HepG2 (cell line): ENCODE measurements at regions of chr7 and their contacts with region 1.

Region 1: GRCh38 chr7:50696810-50697582 is 85.7 kb downstream of the GRB10 start:
- DNase-seq: peak; percentile 32
- ATAC-seq: peak; percentile 77
- H3K4me3 ChIP-seq: no peak overlapping the region
- H3K27ac ChIP-seq: no peak overlapping the region
- H3K4me1 ChIP-seq: 0 out of 2 replicates have a peak, but pooled peaks cover 11% of the 10 kb centered on the region
- H3K27me3 ChIP-seq: no peaks in the 10 kb centered on the region
- CTCF ChIP-seq: peak; percentile 55
- EP300 ChIP-seq: no peak; a peak in 1 of 4 replicates
- POLR2A ChIP-seq: no peak
- RAD21 ChIP-seq: peak; percentile 47; the same call in 1 of the 2 replicates

Region 2: GRCh38 chr7:50293509-50294179 is 403.4 kb before region 1 on chr7:
- CTCF ChIA-PET with region 1: no interaction called
- POLR2A ChIA-PET with region 1: no interaction called
- in situ Hi-C with region 1: no loop called
- intact Hi-C with region 1: no loop called
- DNase-seq: no peak
- ATAC-seq: no peak
- H3K4me3 ChIP-seq: no peak overlapping the region
- H3K27ac ChIP-seq: no peak overlapping the region
- H3K4me1 ChIP-seq: no peaks in the 10 kb centered on the region
- H3K27me3 ChIP-seq: no peaks in the 10 kb centered on the region
- CTCF ChIP-seq: no peak
- EP300 ChIP-seq: no peak
- POLR2A ChIP-seq: no peak
- RAD21 ChIP-seq: no peak

Region 3: GRCh38 chr7:50793115-50793946 is 96.3 kb after region 1 on chr7:
- CTCF ChIA-PET with region 1: no interaction called
- POLR2A ChIA-PET with region 1: no interaction called
- in situ Hi-C with region 1: no loop called
- intact Hi-C with region 1: loop called (anchors 2 kb)
- DNase-seq: no peak
- ATAC-seq: peak; percentile 59
- H3K4me3 ChIP-seq: peak overlapping the region; percentile 38 to 70 (median 45); a peak in 5 of 6 replicates
- H3K27ac ChIP-seq: no peak overlapping the region
- H3K4me1 ChIP-seq: peaks cover 18% of the 10 kb centered on the region
- H3K27me3 ChIP-seq: peaks cover 2 to 30% of the 10 kb centered on the region in 2 experiments; a peak in 4 of 5 replicates
- CTCF ChIP-seq: no peak
- EP300 ChIP-seq: no peak
- POLR2A ChIP-seq: no peak
- RAD21 ChIP-seq: no peak

Region 4: DNA sequence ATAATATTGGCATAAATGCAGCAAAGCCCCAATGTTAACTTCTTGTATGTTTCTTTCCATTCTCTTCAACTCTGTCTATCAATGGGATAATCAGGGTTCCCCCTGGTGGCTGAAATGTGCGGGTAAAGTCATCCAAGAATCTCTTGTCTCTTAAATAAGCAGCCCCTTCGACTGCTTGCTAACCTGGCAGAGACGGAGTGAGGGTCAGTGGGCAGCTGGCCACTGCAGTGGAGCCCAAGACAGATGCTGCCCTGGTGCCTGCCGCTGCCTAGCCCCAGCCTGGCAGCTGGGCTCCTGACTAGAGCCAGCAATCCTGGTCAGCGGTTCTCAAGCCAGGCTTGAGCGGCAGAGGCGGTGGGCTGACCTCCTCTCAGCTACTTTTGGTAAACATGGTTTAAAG is 370.8 kb after region 1 on chr7:
- CTCF ChIA-PET with region 1: no interaction called
- POLR2A ChIA-PET with region 1: no interaction called
- in situ Hi-C with region 1: no loop called
- intact Hi-C with region 1: loop called (anchors 5 kb)
- DNase-seq: peak; percentile 53
- ATAC-seq: peak; percentile 89
- H3K4me3 ChIP-seq: no peak overlapping the region
- H3K27ac ChIP-seq: no peak overlapping the region
- H3K4me1 ChIP-seq: peaks cover 12% of the 10 kb centered on the region
- H3K27me3 ChIP-seq: no peaks in the 10 kb centered on the region
- CTCF ChIP-seq: peak; percentile 68
- EP300 ChIP-seq: no peak
- POLR2A ChIP-seq: no peak
- RAD21 ChIP-seq: peak; percentile 43; the same call in 1 of the 2 replicates